ENCODE measurements at regions of chr1 and their contacts with region 1.

Region 1: DNA sequence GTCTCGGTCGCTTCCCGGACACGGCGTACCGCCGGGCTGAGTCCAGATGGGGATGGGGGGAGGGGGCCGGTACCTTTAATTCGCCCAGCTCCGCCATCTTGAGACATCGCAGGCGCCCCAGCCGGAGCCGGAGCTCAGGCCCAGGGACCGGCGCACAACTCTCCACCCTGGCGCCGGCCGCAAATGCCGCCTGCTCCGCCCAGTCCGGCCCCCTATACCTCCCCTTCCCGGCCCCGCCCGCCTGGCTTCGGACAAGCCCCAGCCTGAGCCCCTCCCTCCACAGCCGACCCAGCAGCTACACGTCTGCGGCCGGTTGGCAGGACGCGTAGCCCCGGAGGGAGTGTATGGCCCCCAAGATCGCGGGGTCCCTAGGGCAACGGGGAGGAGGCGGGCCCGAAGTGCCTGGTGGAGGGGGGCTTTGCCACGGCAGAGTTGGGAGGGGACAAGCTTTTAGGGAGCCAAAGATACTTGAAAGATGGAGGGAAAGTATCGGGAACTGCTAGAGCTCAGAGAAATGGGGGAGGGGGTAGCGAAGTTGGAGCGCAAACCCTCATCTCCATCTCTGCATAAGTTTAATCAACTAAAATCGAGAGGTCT is at the start of gene PIAS3:
- DNase-seq: peak; percentile 61 to 90 (median 75)
- ATAC-seq: peak; percentile 79
- H3K4me3 ChIP-seq: peak within 1 kb of the TSS; percentile 75
- H3K4me3 Mint-ChIP-seq: peak within 1 kb of the TSS; percentile 98
- H3K27ac ChIP-seq: peak within 1 kb of the TSS; percentile 32 to 67
- H3K27ac Mint-ChIP-seq: peak within 1 kb of the TSS; percentile 85
- H3K4me1 ChIP-seq: peaks cover 22% of the 10 kb centered on the region
- H3K4me1 Mint-ChIP-seq: peaks cover 20% of the 10 kb centered on the region
- H3K27me3 ChIP-seq: no peaks in the 10 kb centered on the region
- H3K27me3 Mint-ChIP-seq: no peaks in the 10 kb centered on the region
- CTCF ChIP-seq: no peak
- total RNA-seq, gene PIAS3: 18.7 to 19.7 TPM

Region 2: GRCh38 chr1:145795257-145795881 is 63.6 kb before region 1 on chr1:
- CTCF ChIA-PET with region 1: no interaction called
- POLR2A ChIA-PET with region 1: no interaction called
- intact Hi-C with region 1: no loop called
- DNase-seq: no peak
- ATAC-seq: no peak
- H3K4me3 ChIP-seq: no peak overlapping the region
- H3K4me3 Mint-ChIP-seq: no peak overlapping the region
- H3K27ac ChIP-seq: no peak overlapping the region
- H3K27ac Mint-ChIP-seq: no peak overlapping the region
- H3K4me1 ChIP-seq: no peaks in the 10 kb centered on the region
- H3K4me1 Mint-ChIP-seq: peaks cover 15% of the 10 kb centered on the region
- H3K27me3 ChIP-seq: no peaks in the 10 kb centered on the region
- H3K27me3 Mint-ChIP-seq: no peaks in the 10 kb centered on the region
- CTCF ChIP-seq: no peak

Region 3: DNA sequence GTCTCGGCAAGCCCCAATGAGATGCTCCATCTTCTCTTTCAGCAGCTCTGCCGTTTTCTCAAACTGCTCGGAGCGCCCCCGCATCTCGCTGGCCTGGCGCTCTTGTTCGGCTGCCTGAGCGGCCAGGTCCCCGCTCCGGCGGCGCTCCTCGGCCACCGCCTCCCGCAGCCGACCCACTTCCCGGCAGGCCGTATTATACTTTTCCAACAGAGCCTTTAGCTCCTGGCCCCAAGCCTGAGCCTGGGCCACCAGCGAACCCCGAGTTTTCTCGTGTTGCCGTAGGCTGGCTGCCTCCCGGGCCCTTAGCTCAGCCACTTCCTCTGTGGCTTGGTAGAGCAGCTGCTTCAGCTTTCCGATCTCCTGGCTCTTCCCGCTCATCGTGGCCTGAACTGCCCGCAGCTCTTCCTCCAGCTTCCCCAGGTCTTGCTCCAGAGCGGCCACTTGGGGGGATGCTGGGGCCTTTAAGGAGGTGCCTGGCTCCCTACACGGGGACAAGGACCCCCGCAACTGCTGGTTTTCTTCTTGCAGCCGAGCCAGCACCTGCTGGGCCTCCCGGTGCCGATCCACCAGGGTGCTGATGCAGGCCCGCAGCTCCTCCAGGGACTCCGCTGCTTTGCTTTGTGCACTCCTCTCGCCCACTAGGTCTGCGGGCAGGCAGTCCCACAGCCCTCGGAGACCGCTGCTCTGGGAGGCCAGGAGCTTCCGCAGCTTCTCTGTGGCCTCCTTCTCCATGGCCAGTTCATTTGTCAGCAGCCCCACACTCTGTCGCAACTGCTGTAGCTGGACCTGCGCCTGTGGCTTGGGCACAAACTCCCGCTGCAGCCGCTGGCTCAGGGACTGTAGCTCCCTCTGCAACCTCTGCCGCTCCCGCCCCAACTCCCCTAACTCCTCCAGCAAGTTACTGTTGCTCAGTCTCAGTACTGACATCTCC is 13.3 kb after region 1 on chr1:
- CTCF ChIA-PET with region 1: no interaction called
- POLR2A ChIA-PET with region 1: interaction called, 39 read pairs
- intact Hi-C with region 1: no loop called
- DNase-seq: peak in 13 of 14 experiments; percentile 12 to 60 (median 36)
- ATAC-seq: peak; percentile 76
- H3K4me3 ChIP-seq: peak overlapping the region; percentile 49
- H3K4me3 Mint-ChIP-seq: peak overlapping the region; percentile 83
- H3K27ac ChIP-seq: no peak overlapping the region
- H3K27ac Mint-ChIP-seq: peak overlapping the region; percentile 50
- H3K4me1 ChIP-seq: peaks cover 17% of the 10 kb centered on the region
- H3K4me1 Mint-ChIP-seq: peaks cover 18% of the 10 kb centered on the region
- H3K27me3 ChIP-seq: peaks cover 0 to 2% of the 10 kb centered on the region in 2 experiments
- H3K27me3 Mint-ChIP-seq: no peaks in the 10 kb centered on the region
- CTCF ChIP-seq: no peak

Region 4: DNA sequence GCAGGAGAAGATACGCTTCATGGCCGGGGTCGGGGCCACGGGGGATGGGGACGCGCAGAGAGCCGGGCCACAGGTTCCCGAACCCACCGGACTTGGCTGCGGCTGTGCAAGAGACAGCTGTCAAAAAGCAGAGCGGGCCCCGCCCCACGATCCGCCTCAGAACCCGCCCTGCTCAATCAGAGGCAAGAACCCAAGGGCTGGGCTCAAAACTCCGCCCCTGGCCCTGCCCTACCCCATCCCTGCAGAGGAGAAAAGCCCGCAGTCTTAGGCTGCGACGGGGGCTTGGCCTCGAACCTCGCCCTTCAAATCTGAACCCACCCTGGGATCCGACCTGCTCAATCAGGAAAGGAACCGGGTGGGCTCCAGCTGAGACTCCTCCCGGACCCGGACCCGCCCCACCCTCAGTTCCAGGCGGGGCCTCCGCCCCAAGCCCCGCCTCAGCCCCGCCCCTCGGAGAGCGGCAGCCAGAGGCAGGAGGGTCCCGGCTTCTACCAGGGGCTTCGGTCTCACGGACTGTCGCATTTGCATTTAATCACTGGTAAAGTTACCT is 26.8 kb after region 1 on chr1 and contains the start of gene ANKRD35:
- CTCF ChIA-PET with region 1: no interaction called
- POLR2A ChIA-PET with region 1: interaction called, 24 read pairs
- intact Hi-C with region 1: loop called (anchors 1 to 2 kb)
- DNase-seq: peak; percentile 70 to 92 (median 84)
- ATAC-seq: peak; percentile 99
- H3K4me3 ChIP-seq: peak within 1 kb of the TSS; percentile 70
- H3K4me3 Mint-ChIP-seq: peak within 1 kb of the TSS; percentile 89
- H3K27ac ChIP-seq: no peak within 1 kb of the TSS
- H3K27ac Mint-ChIP-seq: no peak within 1 kb of the TSS
- H3K4me1 ChIP-seq: peaks cover 17% of the 10 kb centered on the region
- H3K4me1 Mint-ChIP-seq: peaks cover 20% of the 10 kb centered on the region
- H3K27me3 ChIP-seq: peaks cover 14 to 22% of the 10 kb centered on the region in 2 experiments
- H3K27me3 Mint-ChIP-seq: peaks cover 27% of the 10 kb centered on the region
- CTCF ChIP-seq: no peak
- total RNA-seq, gene ANKRD35: 0.11 TPM in 1 of 2 experiments, not detected in the other

Region 5: DNA sequence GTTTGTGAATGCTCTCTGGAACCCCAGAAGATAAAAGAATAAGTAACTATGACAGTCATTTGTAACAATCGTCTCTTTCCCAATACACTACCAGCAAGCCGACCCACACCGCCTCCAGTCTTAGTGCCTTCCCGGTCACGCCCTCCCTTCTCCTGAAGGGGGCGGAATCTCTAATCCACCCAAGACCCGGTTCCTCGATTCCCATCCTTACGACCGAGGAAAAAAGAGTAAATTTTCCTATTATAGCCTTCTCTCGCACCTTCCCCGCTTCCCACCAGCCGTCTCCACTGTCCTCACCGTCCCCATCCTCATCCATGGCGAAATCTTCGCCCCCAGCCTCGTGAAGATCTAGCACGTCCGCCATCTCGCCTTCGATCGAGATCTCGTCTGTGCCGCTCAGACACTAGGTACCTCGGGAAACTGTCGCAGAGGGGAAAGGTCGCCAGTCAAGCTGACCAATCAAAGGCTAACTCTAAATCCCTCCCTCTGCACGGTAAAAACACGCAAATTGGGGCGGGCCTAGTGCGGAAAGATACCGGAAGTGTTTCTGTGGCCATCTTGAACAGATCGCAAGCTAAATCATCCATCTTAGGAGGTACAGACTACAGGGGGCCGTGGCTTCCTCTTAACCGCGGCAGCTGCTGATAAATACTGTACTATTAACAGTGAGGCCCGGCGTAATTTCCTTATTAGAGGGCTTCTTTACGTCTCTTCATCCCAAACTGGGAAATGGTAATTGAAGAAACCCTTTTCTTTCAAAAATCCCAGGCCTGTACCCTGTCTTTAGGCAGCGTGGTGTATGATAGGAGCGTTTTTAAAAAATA is 68.3 kb after region 1 on chr1 and contains the start of gene RBM8A:
- CTCF ChIA-PET with region 1: no interaction called
- POLR2A ChIA-PET with region 1: interaction called, 58 read pairs
- intact Hi-C with region 1: loop called in 1 of 2 experiments (anchors 2 kb)
- DNase-seq: peak; percentile 87 to 99 (median 90)
- ATAC-seq: peak; percentile 96
- H3K4me3 ChIP-seq: peak within 1 kb of the TSS; percentile 95
- H3K4me3 Mint-ChIP-seq: no peak within 1 kb of the TSS
- H3K27ac ChIP-seq: peak within 1 kb of the TSS; percentile 93 to 98
- H3K27ac Mint-ChIP-seq: no peak within 1 kb of the TSS
- H3K4me1 ChIP-seq: peaks cover 37% of the 10 kb centered on the region
- H3K4me1 Mint-ChIP-seq: peaks cover 21% of the 10 kb centered on the region
- H3K27me3 ChIP-seq: no peaks in the 10 kb centered on the region
- H3K27me3 Mint-ChIP-seq: no peaks in the 10 kb centered on the region
- CTCF ChIP-seq: peak; percentile 81
- total RNA-seq, gene RBM8A: 126 to 134 TPM

Region 6: DNA sequence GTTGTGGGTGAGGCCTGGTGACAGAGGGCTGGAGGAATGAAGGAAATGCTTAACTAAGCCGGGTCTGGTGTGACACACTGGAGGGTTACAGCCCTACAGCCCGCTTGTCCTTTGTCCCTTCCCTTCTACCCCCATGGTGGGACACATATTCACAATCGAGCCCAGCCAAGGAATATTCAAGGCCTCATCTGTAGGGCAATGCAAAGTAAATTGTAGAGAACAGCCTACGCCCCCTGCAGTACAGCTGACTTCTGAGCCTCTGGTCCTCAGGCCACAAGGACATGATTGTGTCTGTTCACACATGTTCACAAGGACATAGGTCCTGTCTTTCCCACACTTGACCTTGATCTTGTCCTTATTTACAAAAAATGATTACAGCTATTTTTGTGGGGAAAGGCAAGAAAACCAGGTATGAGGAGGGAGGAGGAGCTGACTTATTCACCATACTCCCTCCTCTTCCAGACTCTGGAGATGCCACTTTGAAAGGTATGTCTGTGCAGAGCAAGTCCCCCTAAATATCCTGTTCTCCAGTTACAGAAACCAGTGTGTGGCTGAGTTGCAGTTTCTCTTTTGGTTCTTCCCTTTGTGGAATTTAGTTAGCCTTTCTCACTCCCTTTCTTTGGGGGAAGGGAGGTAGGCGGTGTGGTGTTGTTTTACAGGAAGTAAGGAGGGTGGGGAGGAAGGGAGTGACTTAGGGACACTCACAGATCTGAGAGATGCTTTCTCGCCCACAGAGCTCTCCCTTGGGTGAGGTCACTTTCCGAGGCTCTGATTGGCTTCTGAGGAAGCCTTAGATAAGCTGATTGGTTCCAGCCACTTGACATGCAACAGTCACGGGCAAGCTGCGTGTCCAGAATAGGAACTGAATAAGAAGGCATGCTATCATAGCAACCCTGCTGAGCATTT is 120.1 kb after region 1 on chr1:
- CTCF ChIA-PET with region 1: interaction called, 3 read pairs
- POLR2A ChIA-PET with region 1: interaction called, 22 read pairs
- intact Hi-C with region 1: no loop called
- DNase-seq: peak in 13 of 14 experiments; percentile 45 to 97 (median 66)
- ATAC-seq: peak; percentile 69
- H3K4me3 ChIP-seq: peak overlapping the region; percentile 45
- H3K4me3 Mint-ChIP-seq: no peak overlapping the region
- H3K27ac ChIP-seq: peak overlapping the region; percentile 93 to 94
- H3K27ac Mint-ChIP-seq: no peak overlapping the region
- H3K4me1 ChIP-seq: peaks cover 69% of the 10 kb centered on the region
- H3K4me1 Mint-ChIP-seq: peaks cover 6% of the 10 kb centered on the region
- H3K27me3 ChIP-seq: no peaks in the 10 kb centered on the region
- H3K27me3 Mint-ChIP-seq: no peaks in the 10 kb centered on the region
- CTCF ChIP-seq: peak; percentile 28

Region 7: DNA sequence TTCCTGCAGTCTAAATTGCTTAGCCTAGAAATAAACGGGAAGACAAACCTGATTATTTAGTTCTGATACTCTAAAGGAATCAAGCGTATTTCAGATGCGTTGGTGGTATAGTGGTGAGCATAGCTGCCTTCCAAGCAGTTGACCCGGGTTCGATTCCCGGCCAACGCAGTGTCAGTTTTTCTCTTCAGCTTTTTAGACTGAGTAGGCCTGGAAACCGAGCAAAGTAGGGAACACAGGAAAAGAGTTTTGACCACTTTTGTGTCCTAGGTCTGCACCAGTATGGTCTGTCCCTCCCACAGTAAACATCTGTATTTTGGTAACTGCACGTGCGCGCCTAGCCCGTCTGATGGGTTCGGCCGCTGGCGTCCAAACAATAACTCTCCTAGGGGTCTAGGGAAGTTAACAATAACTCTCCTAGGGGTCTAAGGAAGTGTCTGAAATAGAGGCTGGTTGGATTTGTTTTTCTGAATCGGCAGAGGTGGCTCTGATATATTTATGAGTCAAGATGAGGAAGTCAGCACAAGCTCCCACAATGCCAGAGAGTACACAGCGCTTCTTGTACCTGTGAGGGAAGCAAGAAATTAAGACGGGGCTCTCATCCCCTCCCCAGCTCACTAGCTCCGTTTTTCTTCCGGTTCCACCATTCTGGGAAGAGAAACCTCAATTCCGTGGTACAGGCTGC is 178.1 kb after region 1 on chr1:
- CTCF ChIA-PET with region 1: interaction called, 3 read pairs
- POLR2A ChIA-PET with region 1: interaction called, 56 read pairs
- intact Hi-C with region 1: no loop called
- DNase-seq: peak; percentile 50 to 88 (median 68)
- ATAC-seq: peak; percentile 59
- H3K4me3 ChIP-seq: peak overlapping the region; percentile 83
- H3K4me3 Mint-ChIP-seq: peak overlapping the region; percentile 98
- H3K27ac ChIP-seq: peak overlapping the region; percentile 58 to 83
- H3K27ac Mint-ChIP-seq: peak overlapping the region; percentile 100
- H3K4me1 ChIP-seq: peaks cover 38% of the 10 kb centered on the region
- H3K4me1 Mint-ChIP-seq: peaks cover 45% of the 10 kb centered on the region
- H3K27me3 ChIP-seq: no peaks in the 10 kb centered on the region
- H3K27me3 Mint-ChIP-seq: peaks cover 40% of the 10 kb centered on the region
- CTCF ChIP-seq: no peak